KBM-7 (cell line): ENCODE measurements at regions of chr13 and their contacts with region 1.

Region 1: DNA sequence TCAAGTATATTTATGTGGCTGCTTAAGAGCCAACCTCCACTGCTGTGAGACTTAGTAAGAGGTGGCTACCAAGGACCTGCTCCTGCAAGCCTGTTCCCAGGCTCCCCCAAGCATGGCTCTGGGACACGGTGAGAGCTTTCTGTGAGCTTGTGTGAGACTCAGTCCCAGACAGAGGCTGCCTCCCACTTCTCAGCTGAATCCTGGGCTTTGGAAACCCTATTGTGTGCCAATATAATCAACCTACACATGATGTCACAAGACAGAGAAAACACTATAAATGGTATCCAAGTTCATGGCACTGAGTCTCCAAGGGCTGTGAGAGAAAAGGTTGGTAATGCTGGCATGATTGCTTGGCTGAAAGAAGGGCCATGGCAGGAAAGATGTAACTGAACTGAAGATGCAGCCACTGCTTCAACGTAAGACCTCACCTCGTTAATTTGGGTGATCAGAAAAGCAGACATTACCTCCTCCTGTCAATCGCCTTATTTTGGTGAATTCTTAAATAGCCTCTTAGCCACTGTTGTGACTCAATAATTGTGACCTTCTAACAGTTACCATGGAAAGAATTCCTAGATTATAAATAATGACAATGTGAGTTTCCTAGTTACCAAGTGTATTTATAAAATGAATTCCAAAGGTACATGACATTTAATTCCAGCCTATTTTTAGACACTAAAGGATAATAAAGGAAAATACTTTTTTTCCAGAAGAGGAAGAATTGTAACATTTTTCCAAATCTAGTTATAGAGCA is 332.0 kb downstream of the IRS2 start:
- DNase-seq: no peak

Region 2: DNA sequence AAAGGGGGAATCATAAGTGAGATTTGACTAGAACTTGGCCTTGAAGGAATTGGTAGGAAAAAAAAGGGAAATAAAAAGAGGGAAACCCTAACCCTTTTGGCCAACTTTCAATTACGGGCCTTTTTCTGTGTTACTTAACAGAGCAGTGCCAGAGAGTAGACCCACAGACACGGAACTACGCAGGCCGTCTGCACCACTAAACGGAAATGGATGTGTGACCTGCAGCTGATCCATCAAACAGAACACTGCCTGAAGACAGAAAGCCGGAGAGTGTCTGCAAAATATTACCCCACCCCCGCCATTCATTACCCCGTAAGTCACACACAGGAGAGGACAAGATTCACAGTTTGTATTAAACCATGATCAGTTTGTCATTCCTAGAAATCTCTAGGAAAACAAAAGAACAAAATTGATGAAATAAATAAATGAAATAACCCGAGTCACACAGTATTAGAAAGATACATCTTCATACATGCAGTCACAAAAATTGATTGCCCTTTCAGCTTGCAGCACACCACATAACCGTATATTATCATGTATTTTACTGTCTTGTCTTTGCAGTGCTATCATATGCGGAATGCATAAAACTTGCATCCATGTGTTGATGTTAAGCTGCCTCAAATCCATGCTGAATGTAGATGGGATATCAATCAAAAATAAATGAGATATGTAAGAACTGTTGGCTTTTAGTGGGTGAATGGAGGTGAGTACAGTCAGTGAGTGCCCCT is 92.6 kb before region 1 on chr13:
- in situ Hi-C with region 1: loop called (anchors 25 kb)
- DNase-seq: no peak